Activated CD4-positive, alpha-beta T cell treated with anti-CD3 and anti-CD28 coated beads for 36 hours (primary cell): ENCODE measurements at regions of chr2 and their contacts with region 1.

Region 1: GRCh38 chr2:217785544-217786045 is 217.2 kb downstream of the TNS1 start:
- DNase-seq: peak; percentile 88
- ATAC-seq: peak; percentile 71
- H3K4me3 Mint-ChIP-seq: no peak overlapping the region
- H3K27ac Mint-ChIP-seq: peak overlapping the region; percentile 2
- H3K4me1 Mint-ChIP-seq: peaks cover 7% of the 10 kb centered on the region
- H3K27me3 Mint-ChIP-seq: no peaks in the 10 kb centered on the region

Region 2: GRCh38 chr2:217568289-217568971 is 217.2 kb before region 1 on chr2:
- CTCF ChIA-PET with region 1: no interaction called
- POLR2A ChIA-PET with region 1: no interaction called
- intact Hi-C with region 1: no loop called
- DNase-seq: no peak
- ATAC-seq: no peak
- H3K4me3 Mint-ChIP-seq: no peak overlapping the region
- H3K27ac Mint-ChIP-seq: no peak overlapping the region
- H3K4me1 Mint-ChIP-seq: no peaks in the 10 kb centered on the region
- H3K27me3 Mint-ChIP-seq: no peaks in the 10 kb centered on the region

Region 3: GRCh38 chr2:217732992-217733391 is 52.6 kb before region 1 on chr2:
- CTCF ChIA-PET with region 1: no interaction called
- POLR2A ChIA-PET with region 1: no interaction called
- intact Hi-C with region 1: no loop called
- DNase-seq: no peak
- ATAC-seq: no peak
- H3K4me3 Mint-ChIP-seq: no peak overlapping the region
- H3K27ac Mint-ChIP-seq: no peak overlapping the region
- H3K4me1 Mint-ChIP-seq: peaks cover 19% of the 10 kb centered on the region
- H3K27me3 Mint-ChIP-seq: peaks cover 3% of the 10 kb centered on the region

Region 4: GRCh38 chr2:217820091-217820819 is 34.7 kb after region 1 on chr2:
- CTCF ChIA-PET with region 1: no interaction called
- POLR2A ChIA-PET with region 1: no interaction called
- intact Hi-C with region 1: no loop called
- DNase-seq: no peak
- ATAC-seq: no peak
- H3K4me3 Mint-ChIP-seq: no peak overlapping the region
- H3K27ac Mint-ChIP-seq: no peak overlapping the region
- H3K4me1 Mint-ChIP-seq: no peaks in the 10 kb centered on the region
- H3K27me3 Mint-ChIP-seq: no peaks in the 10 kb centered on the region

Region 5: GRCh38 chr2:217886720-217887309 is 101.2 kb after region 1 on chr2:
- CTCF ChIA-PET with region 1: interaction called, 125 read pairs
- POLR2A ChIA-PET with region 1: no interaction called
- intact Hi-C with region 1: loop called (anchors 1 kb)
- DNase-seq: peak; percentile 84
- ATAC-seq: peak; percentile 86
- H3K4me3 Mint-ChIP-seq: no peak overlapping the region
- H3K27ac Mint-ChIP-seq: no peak overlapping the region
- H3K4me1 Mint-ChIP-seq: no peaks in the 10 kb centered on the region
- H3K27me3 Mint-ChIP-seq: peaks cover 4% of the 10 kb centered on the region

Region 6: DNA sequence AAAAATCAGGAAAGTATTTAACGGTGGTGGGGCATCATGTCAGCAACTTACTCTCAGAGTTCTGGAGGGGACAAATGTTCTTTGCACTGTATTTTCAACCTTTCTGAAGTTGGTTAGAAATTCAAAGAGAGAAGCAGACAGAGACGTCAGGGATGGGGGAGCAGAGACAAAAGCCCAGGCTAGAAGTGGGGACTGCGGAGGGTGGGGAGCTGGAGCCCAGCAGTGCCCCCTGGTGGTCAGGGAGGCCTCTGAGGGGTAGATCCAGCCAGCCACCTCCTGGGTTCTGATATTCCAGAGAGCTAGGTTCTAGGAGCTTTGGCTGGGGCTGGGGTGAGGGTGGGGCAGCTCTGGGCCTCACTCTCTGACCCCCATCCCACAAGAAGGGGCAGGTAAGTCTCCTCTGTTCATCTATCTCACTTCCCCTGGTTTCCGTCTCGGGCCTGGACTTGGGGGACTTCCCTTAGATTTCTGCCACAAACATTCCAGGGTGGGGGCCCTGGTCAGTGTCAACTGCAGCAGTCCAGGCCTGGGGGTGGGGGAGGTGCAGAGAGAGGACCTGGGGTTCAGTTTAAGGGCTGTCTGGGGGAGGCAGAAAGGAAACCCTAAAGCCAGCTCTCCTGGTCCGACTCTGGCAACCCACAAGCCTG is 208.3 kb after region 1 on chr2:
- CTCF ChIA-PET with region 1: interaction called, 105 read pairs
- POLR2A ChIA-PET with region 1: no interaction called
- intact Hi-C with region 1: loop called in 1 of 2 experiments (anchors 1 kb)
- DNase-seq: peak; percentile 80
- ATAC-seq: peak; percentile 91
- H3K4me3 Mint-ChIP-seq: no peak overlapping the region
- H3K27ac Mint-ChIP-seq: no peak overlapping the region
- H3K4me1 Mint-ChIP-seq: peaks cover 4% of the 10 kb centered on the region
- H3K27me3 Mint-ChIP-seq: peaks cover 5% of the 10 kb centered on the region

Region 7: GRCh38 chr2:218046238-218046637 is 260.6 kb after region 1 on chr2:
- CTCF ChIA-PET with region 1: interaction called, 10 read pairs
- POLR2A ChIA-PET with region 1: no interaction called
- intact Hi-C with region 1: no loop called
- DNase-seq: no peak
- ATAC-seq: no peak
- H3K4me3 Mint-ChIP-seq: no peak overlapping the region
- H3K27ac Mint-ChIP-seq: no peak overlapping the region
- H3K4me1 Mint-ChIP-seq: peaks cover 4% of the 10 kb centered on the region
- H3K27me3 Mint-ChIP-seq: peaks cover 6% of the 10 kb centered on the region

Region 8: DNA sequence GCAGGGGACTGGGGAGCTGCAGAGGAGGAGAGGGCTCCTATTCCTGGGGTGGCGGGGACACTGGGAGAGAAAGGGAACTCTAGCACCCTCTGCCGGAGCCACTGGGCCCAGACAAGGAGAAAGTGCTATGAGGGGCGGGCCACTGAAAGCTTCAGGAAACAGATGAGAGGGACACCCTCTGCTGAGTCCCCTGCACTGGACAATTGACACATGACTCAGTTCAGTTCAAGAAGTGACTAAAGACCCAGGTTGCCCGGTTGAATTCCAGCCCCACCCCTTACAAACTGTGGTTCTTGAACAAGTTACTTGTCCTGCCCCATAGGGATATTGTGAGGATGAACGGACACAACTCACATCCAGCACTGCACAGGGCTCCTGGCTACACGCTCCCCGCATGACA is 288.4 kb after region 1 on chr2:
- CTCF ChIA-PET with region 1: interaction called, 13 read pairs
- POLR2A ChIA-PET with region 1: no interaction called
- intact Hi-C with region 1: loop called in 1 of 2 experiments (anchors 1 kb)
- DNase-seq: peak; percentile 59
- ATAC-seq: peak; percentile 64
- H3K4me3 Mint-ChIP-seq: no peak overlapping the region
- H3K27ac Mint-ChIP-seq: no peak overlapping the region
- H3K4me1 Mint-ChIP-seq: peaks cover 4% of the 10 kb centered on the region
- H3K27me3 Mint-ChIP-seq: peaks cover 4% of the 10 kb centered on the region

Region 9: DNA sequence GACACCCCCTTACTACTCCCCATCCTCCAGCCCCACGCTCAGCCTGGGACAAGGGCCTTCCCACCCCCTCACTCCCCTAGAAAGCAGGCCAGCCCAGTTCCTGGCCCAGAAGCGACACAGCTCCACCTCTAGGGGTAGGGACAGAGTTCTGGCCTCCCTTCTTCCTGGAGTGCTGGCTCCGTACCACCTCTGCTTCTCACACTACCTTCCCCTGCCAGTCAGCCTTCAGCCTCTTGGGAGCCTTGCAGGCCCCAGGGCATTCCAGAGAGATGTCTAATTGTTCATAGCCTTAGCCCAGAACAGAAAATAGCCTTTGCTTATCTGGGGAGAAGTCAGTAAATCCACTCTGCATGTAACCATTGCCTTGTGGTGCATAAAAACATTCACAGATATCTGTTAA is 558.0 kb after region 1 on chr2:
- CTCF ChIA-PET with region 1: no interaction called
- POLR2A ChIA-PET with region 1: no interaction called
- intact Hi-C with region 1: no loop called
- DNase-seq: no peak
- ATAC-seq: no peak
- H3K4me3 Mint-ChIP-seq: no peak overlapping the region
- H3K27ac Mint-ChIP-seq: no peak overlapping the region
- H3K4me1 Mint-ChIP-seq: no peaks in the 10 kb centered on the region
- H3K27me3 Mint-ChIP-seq: no peaks in the 10 kb centered on the region